SK-N-SH (cell line): ENCODE measurements at regions of chr5 and their contacts with region 1.

Region 1: GRCh38 chr5:163437309-163438182 is at the start of gene CCNG1:
- DNase-seq: peak; percentile 93
- H3K4me3 ChIP-seq: peak within 1 kb of the TSS; percentile 91 to 98
- H3K27ac ChIP-seq: peak within 1 kb of the TSS; percentile 76 to 95
- H3K4me1 ChIP-seq: peaks cover 12 to 24% of the 10 kb centered on the region in 2 experiments; a peak in 3 of 4 replicates
- H3K27me3 ChIP-seq: no peaks in the 10 kb centered on the region
- CTCF ChIP-seq: no peak
- EP300 ChIP-seq: no peak
- RAD21 ChIP-seq: no peak
- polyA plus RNA-seq, gene CCNG1: 49.0 and 62.0 TPM in 2 replicates

Region 2: DNA sequence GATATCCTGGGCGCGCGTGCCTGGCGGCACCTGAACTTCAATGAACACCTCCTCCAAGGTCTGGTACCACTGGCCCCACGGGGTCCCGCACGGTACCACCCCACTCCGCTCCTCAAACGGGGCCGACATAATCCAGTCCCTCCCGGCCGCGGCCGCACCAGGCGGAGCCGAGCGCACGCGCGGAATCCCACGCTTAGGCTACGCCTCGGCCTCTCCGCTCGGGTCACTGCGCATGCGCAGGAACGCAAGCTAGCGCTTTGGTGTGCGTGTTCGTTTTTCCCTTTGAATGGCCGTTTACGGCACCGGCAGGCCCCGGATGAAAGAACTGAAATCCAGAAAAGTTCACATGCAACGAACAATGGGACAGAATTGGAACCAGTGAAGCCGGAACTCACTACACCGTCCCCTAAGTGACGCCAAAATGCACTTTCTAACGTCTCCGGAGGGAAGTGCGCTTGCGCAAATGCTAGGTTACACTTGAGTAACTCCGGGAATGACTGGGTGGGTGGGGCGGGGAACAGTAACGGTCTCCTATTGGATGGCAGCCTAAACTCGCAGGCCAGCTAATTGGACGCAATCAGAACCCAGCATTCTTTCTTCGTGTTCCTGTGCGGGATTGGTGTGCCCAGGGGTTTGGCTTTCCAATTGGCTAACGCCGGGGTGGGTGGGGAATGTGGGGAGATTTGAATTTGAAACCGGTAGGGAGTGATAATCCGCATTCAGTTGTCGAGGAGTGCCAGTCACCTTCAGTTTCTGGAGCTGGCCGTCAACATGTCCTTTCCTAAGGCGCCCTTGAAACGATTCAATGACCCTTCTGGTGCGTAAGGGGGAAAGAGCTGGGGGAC is 22.6 kb after region 1 on chr5 and contains the starts of genes HMMR and NUDCD2:
- CTCF ChIA-PET with region 1: no interaction called
- POLR2A ChIA-PET with region 1: interaction called, 25 read pairs
- DNase-seq: peak; percentile 88
- H3K4me3 ChIP-seq: peak within 1 kb of the TSS; percentile 83 to 90
- H3K27ac ChIP-seq: peak within 1 kb of the TSS; percentile 98 to 99
- H3K4me1 ChIP-seq: peaks cover 12% of the 10 kb centered on the region in 2 experiments; a peak in 3 of 4 replicates
- H3K27me3 ChIP-seq: no peaks in the 10 kb centered on the region
- CTCF ChIP-seq: peak; percentile 46; the same call in 1 of the 2 replicates
- EP300 ChIP-seq: no peak
- RAD21 ChIP-seq: no peak
- polyA plus RNA-seq, gene HMMR: 7.7 and 7.8 TPM in 2 replicates
- polyA plus RNA-seq, gene NUDCD2: 7.8 and 8.6 TPM in 2 replicates